ENCODE measurements at regions of chr12 and their contacts with region 1.

Region 1: DNA sequence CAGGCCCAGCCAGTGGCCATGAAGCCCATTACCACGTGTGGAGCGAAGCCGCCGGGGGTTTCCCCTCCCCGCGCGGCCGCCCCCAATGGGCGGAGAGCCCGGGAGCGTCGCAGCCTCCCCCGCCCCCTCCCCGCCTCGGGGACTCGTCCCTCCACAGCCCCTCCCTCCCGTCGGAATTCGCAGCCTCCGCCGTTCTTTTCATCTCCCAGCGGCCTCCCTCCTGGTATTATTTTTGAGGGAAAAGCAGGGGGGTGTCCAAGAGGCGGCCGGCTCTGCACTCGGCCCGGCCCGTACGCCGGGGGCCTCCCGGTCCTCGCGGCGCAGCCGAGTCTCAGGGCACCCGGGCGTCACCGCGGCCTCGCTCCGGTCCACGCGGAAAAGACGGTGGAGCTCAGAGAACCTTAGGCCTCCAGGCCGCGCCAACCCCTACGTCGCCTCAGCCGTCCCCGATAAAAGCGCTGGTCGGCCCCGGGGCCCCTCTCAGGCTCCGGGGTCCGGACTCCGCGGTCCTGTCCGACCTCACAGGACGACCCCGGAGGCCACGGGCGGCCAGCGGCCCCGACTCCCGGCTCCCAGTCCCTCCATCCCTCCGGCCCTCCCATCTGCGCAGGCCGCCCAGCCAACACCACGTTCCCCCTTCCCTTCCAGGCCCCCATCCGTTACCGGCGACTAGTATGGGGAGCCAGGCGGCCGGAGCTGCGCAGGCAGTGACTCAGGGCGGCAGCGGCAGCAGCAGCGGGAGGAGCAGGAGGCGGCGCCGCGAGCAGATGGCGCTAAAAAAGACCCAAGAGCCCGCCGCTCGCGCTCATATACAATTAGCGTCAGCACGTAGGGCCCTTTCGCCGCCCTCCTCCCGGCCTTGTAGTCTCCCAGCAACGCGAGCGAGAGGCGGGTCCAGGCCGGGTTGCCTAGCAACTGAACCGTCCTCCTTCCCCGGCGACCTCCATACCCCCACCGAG is at the start of gene NAP1L1:
- DNase-seq: peak; percentile 96 to 98
- H3K4me3 ChIP-seq: peak within 1 kb of the TSS; percentile 78
- H3K4me3 Mint-ChIP-seq: peak within 1 kb of the TSS; percentile 96
- H3K27ac Mint-ChIP-seq: peak within 1 kb of the TSS; percentile 99
- H3K4me1 ChIP-seq: peaks cover 15% of the 10 kb centered on the region
- H3K4me1 Mint-ChIP-seq: peaks cover 26% of the 10 kb centered on the region
- H3K27me3 ChIP-seq: no peaks in the 10 kb centered on the region
- H3K27me3 Mint-ChIP-seq: no peaks in the 10 kb centered on the region
- CTCF ChIP-seq: peak in 1 of 2 experiments; percentile 5
- total RNA-seq, gene NAP1L1: 696 and 711 TPM in 2 replicates

Region 2: DNA sequence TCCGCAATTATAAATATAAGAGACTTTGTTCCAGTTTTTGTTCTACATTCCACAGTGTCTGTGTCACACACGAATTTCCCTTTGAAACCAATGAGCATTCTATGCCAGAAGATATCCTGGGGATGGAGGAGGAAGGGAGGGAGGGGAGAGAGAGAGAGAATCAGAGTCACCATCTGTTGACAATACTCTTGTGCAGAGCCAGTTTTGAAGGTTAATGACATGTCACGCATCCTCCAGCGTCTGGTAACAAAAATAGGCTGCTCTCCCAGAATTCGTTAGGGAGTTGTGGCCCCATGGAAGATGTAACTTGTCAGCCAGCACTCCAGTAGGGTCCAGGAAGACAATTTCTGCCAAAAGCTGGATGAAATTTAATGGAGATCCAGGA is 359.3 kb before region 1 on chr12:
- CTCF ChIA-PET with region 1: no interaction called
- POLR2A ChIA-PET with region 1: no interaction called
- intact Hi-C with region 1: no loop called
- DNase-seq: no peak
- H3K4me3 ChIP-seq: no peak overlapping the region
- H3K4me3 Mint-ChIP-seq: no peak overlapping the region
- H3K27ac Mint-ChIP-seq: peak overlapping the region; percentile 42
- H3K4me1 ChIP-seq: peaks cover 55% of the 10 kb centered on the region
- H3K4me1 Mint-ChIP-seq: peaks cover 50% of the 10 kb centered on the region
- H3K27me3 ChIP-seq: no peaks in the 10 kb centered on the region
- H3K27me3 Mint-ChIP-seq: no peaks in the 10 kb centered on the region
- CTCF ChIP-seq: no peak

Region 3: GRCh38 chr12:76103958-76104357 is 19.8 kb after region 1 on chr12:
- CTCF ChIA-PET with region 1: no interaction called
- POLR2A ChIA-PET with region 1: interaction called, 3 read pairs
- intact Hi-C with region 1: loop called (anchors 1 kb)
- DNase-seq: no peak
- H3K4me3 ChIP-seq: no peak overlapping the region
- H3K4me3 Mint-ChIP-seq: no peak overlapping the region
- H3K27ac Mint-ChIP-seq: no peak overlapping the region
- H3K4me1 ChIP-seq: peaks cover 24% of the 10 kb centered on the region
- H3K4me1 Mint-ChIP-seq: no peaks in the 10 kb centered on the region
- H3K27me3 ChIP-seq: no peaks in the 10 kb centered on the region
- H3K27me3 Mint-ChIP-seq: no peaks in the 10 kb centered on the region
- CTCF ChIP-seq: no peak

Region 4: DNA sequence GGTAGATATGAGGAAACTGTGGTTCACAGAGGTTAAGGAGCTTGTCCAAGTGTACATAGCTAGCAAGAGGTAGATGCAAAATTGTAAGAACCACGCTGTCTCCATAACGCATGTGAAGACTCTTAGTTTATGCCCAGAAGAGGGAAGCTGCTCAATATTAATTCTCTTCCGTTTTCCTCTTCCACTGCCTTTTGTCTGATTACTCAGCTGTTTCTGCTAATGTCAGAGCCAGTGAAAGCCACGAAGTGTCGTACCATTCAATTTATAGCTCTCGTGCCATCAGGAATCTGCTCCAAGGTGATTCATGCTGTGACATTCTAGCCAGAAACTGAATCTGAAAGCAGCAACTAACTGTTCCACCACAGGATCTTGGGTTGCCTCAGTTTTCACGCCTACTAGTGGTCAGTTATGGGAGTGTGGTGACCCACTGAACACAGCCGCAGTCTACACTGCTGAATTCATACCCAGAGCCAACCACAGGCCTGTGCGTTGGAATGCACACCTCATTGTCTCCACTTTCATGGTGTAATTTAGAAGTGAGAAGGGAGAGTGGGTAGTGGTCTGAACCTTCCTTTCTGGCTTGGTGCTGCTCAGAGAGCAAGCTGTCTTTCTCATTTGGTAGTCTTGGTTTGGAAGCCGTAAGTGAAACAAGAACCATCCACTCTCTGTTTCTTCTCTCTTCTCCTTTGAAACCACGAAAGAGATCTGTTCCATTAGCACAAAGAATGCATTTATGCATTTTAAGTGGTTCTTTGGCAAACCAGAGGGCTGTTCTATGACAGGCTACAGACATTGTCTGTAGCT is 74.5 kb after region 1 on chr12:
- CTCF ChIA-PET with region 1: no interaction called
- POLR2A ChIA-PET with region 1: no interaction called
- intact Hi-C with region 1: loop called (anchors 5 kb)
- DNase-seq: peak; percentile 44 to 61
- H3K4me3 ChIP-seq: no peak overlapping the region
- H3K4me3 Mint-ChIP-seq: no peak overlapping the region
- H3K27ac Mint-ChIP-seq: no peak overlapping the region
- H3K4me1 ChIP-seq: no peaks in the 10 kb centered on the region
- H3K4me1 Mint-ChIP-seq: peaks cover 8% of the 10 kb centered on the region
- H3K27me3 ChIP-seq: no peaks in the 10 kb centered on the region
- H3K27me3 Mint-ChIP-seq: no peaks in the 10 kb centered on the region
- CTCF ChIP-seq: peak; percentile 66 to 67

Region 5: DNA sequence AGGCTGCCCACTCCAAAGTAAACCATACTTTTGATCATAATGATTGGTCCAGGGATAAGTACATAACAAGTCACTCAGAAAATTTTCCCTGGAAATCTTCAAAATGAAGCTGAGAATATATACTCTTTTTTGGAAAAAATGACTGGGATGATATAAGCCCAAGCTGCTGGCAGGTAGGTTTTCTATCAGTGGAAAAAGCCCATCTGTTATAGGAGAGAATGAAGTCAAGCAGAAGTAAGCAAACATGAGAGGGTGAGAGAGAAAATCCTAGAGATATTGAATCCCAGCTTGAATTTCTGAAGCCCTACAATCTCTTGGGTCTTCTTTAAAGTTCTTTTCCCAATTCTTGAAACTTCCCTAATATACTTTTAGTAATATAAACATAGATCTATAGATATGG is 642.4 kb after region 1 on chr12:
- CTCF ChIA-PET with region 1: no interaction called
- POLR2A ChIA-PET with region 1: no interaction called
- intact Hi-C with region 1: no loop called
- DNase-seq: no peak
- H3K4me3 ChIP-seq: no peak overlapping the region
- H3K4me3 Mint-ChIP-seq: no peak overlapping the region
- H3K27ac Mint-ChIP-seq: no peak overlapping the region
- H3K4me1 ChIP-seq: peaks cover 1% of the 10 kb centered on the region; the same call in 1 of the 2 replicates
- H3K4me1 Mint-ChIP-seq: no peaks in the 10 kb centered on the region
- H3K27me3 ChIP-seq: no peaks in the 10 kb centered on the region
- H3K27me3 Mint-ChIP-seq: no peaks in the 10 kb centered on the region
- CTCF ChIP-seq: no peak